Breast epithelium (tissue), 4 donors: ENCODE measurements at regions of chr16 and their contacts with region 1.

Region 1: DNA sequence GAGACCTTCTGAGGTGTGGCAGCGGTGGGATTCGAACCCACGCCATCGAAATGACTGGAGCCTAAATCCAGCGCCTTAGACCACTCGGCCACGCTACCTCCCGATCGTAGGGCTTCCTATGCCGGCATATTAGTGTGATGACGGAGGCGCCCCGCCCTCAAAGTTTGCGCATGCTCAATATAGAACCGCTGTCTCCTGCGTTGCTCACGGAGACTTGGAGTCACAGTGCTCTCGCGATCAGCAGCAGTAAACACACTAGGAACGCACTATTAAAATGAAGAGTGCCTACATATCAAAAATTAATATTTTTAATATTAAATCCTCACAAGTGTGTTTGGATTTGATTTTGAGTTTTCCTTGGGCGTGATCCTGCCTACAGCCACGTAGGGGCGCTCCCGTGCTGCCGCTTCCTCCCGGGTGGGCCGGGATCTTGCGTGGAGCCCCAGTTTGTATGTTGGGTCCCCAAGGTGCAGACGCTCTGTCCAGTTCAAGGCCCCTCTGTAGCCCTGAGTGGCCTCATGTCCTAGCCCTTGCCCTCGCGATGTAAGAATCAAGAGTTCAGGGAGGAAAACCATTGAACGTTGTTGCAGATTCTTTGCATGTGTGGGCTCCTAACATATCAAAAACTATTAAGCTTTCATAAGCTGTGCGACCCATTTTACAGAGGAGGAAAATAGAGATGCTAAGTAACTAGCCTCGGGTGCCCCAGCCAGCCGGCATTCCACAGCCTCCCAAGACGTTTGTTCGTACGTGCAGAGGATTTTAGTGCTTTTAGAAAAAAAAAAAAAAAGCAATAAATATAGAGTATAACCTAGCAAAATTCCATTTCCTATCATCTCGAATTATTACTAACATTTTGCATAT is 10.2 kb upstream of the EEF2K start:
- DNase-seq: peak; percentile 92 to 96
- H3K4me3 ChIP-seq: peak overlapping the region; percentile 37 to 65 (median 56)
- H3K27ac ChIP-seq: peak overlapping the region; percentile 81 to 87
- H3K4me1 ChIP-seq: peaks cover 0 to 3% of the 10 kb centered on the region in 2 donors
- H3K27me3 ChIP-seq: no peaks in the 10 kb centered on the region
- CTCF ChIP-seq: peak; percentile 77 to 96 (median 94)
- POLR2A ChIP-seq: peak; percentile 25

Region 2: GRCh38 chr16:22291860-22292692 is 96.1 kb after region 1 on chr16:
- intact Hi-C with region 1: loop called (anchors 5 kb)
- DNase-seq: no peak
- H3K4me3 ChIP-seq: no peak overlapping the region
- H3K27ac ChIP-seq: no peak overlapping the region
- H3K4me1 ChIP-seq: no peaks in the 10 kb centered on the region
- H3K27me3 ChIP-seq: no peaks in the 10 kb centered on the region
- CTCF ChIP-seq: no peak
- POLR2A ChIP-seq: no peak